Naive thymus-derived CD4-positive, alpha-beta T cell (primary cell): ENCODE measurements at regions of chr7 and their contacts with region 1.

Region 1: GRCh38 chr7:64665980-64666662 is at the start of gene ZNF107:
- DNase-seq: peak; percentile 48 to 90 (median 84)
- ATAC-seq: peak; percentile 98
- H3K4me3 ChIP-seq: peak within 1 kb of the TSS; percentile 92
- H3K4me3 Mint-ChIP-seq: peak within 1 kb of the TSS; percentile 92 to 98 (median 96)
- H3K27ac ChIP-seq: peak within 1 kb of the TSS; percentile 96
- H3K27ac Mint-ChIP-seq: peak within 1 kb of the TSS; percentile 96 to 98 (median 97)
- H3K4me1 ChIP-seq: peaks cover 11 to 19% of the 10 kb centered on the region in 2 donors
- H3K4me1 Mint-ChIP-seq: peaks cover 18 to 79% (median 71%) of the 10 kb centered on the region in 7 donors
- H3K27me3 ChIP-seq: no peaks in the 10 kb centered on the region
- H3K27me3 Mint-ChIP-seq: no peaks in the 10 kb centered on the region
- total RNA-seq, gene ZNF107: 11.2 to 33.5 (median 17.3) TPM

Region 2: DNA sequence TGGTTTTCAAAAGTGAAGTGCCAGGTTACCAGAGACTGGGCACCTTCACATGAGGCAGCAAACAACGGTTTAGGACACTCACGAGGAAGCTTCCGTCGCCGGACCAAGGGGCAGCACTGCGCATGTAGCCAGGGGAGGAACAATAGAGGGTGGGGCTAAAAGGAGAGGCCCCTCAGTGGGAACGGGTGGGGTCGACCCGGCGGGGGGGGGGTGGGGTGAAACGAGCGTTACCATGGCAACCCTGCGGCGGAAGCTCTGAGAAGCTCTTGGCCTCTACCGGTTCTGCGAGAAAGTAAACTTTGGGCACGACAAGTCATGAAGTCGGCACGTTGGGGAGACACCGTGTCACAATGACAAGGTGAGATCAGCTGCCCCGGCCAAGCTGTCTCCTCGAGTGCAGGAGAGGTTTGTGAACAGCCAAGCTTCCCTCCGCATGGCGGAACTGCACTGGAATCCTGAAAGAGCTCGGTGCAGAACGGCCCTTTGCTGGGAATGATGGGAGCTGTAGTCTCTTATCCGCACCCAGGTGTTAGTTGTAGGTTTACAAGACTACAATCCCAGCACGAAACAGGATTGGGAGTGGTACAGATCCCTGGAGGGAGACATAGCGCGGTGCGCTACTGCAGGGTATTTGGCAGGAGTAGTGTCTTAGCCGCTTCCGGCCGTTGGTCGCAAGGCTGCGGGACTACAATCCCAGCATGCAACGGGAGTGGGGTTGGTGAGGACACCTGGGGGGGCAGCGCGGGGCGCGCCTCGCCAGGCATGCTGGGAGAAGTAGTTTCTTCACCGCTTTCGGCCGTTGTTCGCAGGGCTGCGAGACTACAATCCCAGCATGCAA is 740.3 kb before region 1 on chr7:
- CTCF ChIA-PET with region 1: no interaction called
- POLR2A ChIA-PET with region 1: interaction called, 5 read pairs
- intact Hi-C with region 1: loop called in 1 of 2 experiments (anchors 1 kb)
- DNase-seq: peak; percentile 69 to 98 (median 95)
- ATAC-seq: peak; percentile 98
- H3K4me3 ChIP-seq: peak overlapping the region; percentile 64
- H3K4me3 Mint-ChIP-seq: peak overlapping the region; percentile 88 to 100 (median 98)
- H3K27ac ChIP-seq: peak overlapping the region; percentile 82
- H3K27ac Mint-ChIP-seq: peak overlapping the region; percentile 87 to 98 (median 95)
- H3K4me1 ChIP-seq: no peaks in the 10 kb centered on the region
- H3K4me1 Mint-ChIP-seq: peaks cover 0 to 24% (median 12%) of the 10 kb centered on the region in 7 donors
- H3K27me3 ChIP-seq: no peaks in the 10 kb centered on the region
- H3K27me3 Mint-ChIP-seq: peaks cover 0 to 4% (median 0%) of the 10 kb centered on the region in 5 donors

Region 3: DNA sequence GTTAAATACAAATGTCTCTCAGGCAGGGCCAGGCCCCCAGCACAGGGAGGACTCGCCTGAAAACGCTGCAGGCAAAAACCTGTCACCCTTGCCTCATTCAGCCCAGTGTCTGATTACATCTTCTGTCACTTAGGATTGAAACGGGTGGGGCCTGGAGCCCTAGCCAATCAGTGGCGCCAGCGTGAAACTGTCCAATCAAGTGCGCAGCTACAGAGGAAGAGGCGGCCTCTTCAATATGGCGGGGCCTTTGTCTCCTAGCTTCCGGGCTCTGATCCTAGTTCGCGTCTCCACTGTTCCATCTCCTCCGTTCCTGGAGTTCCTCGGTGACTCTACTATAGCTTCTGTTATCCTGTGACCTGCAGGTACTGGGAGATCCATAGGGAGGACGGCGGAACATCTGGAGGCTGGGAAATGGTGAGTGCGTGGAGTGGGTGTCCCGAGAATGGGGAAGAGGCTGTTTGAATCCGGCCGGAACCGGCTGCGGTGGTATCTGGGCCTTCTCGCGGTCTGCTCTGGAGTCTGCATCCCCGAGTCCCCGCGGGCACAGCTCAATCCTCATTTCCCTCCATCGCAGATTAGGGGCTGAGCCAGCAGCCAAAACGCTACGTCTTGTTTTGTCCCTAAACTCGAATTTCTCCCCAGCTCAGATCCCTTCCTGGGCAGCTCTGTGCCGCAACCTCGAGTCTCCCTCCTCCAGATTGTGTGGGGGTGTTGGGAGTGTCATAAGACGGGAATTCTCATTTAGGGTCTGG is 352.2 kb before region 1 on chr7 and contains the start of gene ZNF736:
- CTCF ChIA-PET with region 1: no interaction called
- POLR2A ChIA-PET with region 1: interaction called, 20 read pairs
- intact Hi-C with region 1: loop called (anchors 1 kb)
- DNase-seq: peak; percentile 64 to 92 (median 87)
- ATAC-seq: peak; percentile 100
- H3K4me3 ChIP-seq: peak within 1 kb of the TSS; percentile 81
- H3K4me3 Mint-ChIP-seq: peak within 1 kb of the TSS; percentile 90 to 100 (median 98)
- H3K27ac ChIP-seq: peak within 1 kb of the TSS; percentile 88
- H3K27ac Mint-ChIP-seq: peak within 1 kb of the TSS; percentile 88 to 100 (median 97)
- H3K4me1 ChIP-seq: peaks cover 8 to 12% of the 10 kb centered on the region in 2 donors
- H3K4me1 Mint-ChIP-seq: peaks cover 22 to 54% (median 39%) of the 10 kb centered on the region in 7 donors
- H3K27me3 ChIP-seq: no peaks in the 10 kb centered on the region
- H3K27me3 Mint-ChIP-seq: no peaks in the 10 kb centered on the region
- total RNA-seq, gene ZNF736: 22.8 to 54.2 (median 35.8) TPM

Region 4: DNA sequence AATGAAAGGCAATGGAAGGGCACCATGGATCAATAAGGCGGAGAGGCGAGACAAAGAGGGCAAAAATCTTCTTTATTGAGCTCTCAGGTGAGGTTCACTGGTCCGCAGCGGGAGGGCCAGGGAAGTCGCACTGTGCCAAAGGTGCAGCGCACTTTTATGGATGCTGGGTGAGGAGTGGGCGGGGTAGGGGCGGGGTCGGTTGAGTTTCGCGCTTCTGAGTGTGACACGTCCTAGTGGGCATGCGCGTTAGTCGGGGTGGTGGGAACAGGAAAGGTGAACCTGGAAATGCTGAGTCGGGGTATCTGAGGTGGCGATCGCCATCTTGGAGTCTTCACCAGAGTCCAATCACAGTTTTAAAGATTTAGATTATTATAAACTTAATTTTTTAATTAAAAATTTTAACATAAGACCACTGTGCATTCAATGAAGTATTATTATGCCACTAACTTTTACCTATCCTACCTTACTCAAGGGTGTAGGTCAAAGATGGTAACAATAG is 173.7 kb after region 1 on chr7:
- CTCF ChIA-PET with region 1: no interaction called
- POLR2A ChIA-PET with region 1: no interaction called
- intact Hi-C with region 1: no loop called
- DNase-seq: no peak
- ATAC-seq: no peak
- H3K4me3 ChIP-seq: no peak overlapping the region
- H3K4me3 Mint-ChIP-seq: no peak overlapping the region
- H3K27ac ChIP-seq: no peak overlapping the region
- H3K27ac Mint-ChIP-seq: no peak overlapping the region
- H3K4me1 ChIP-seq: no peaks in the 10 kb centered on the region
- H3K4me1 Mint-ChIP-seq: no peaks in the 10 kb centered on the region
- H3K27me3 ChIP-seq: no peaks in the 10 kb centered on the region
- H3K27me3 Mint-ChIP-seq: no peaks in the 10 kb centered on the region

Region 5: DNA sequence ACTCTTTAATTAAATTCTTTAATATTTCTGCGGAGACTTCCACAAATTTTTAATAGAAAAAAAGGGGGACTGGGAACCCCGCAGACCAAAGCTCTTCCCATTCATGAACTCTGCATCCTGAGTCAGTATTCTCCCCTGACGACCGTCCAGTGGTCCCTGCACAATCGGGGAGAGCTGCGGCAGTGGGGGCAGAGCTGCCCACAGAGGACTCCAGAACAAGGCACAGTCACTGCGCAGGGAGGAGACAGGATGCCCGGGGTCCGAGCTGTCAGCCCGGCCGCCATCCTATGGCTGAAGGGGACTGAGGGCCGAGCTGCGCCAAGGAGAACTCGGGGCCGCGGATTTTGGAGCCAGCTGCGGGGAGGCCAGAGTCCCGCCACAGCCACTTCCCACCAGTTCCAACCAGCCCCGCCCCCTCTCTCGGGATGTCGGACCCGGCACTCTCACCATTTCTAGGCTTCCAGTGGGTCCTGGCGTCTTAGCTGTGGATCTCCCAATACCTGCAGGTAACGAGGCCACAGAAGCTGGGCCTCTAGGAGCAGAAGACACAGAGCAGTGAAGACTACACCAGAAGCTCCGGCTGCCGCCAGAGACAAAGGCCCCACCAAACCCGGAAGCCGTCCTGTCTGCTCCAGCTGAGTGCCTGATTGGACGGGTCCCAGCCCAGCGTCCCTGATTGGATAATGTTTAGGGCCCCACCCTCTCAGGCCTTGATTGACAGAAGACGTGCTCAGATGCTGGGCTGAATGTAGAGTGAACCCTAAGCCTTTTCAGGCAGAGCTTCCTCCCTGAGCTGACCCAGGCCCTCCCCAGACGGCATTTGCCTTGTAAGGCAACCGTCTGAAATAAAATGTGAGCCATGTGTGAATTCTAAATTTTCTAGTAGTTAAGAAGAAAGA is 340.2 kb after region 1 on chr7 and contains the start of gene ERV3-1:
- CTCF ChIA-PET with region 1: no interaction called
- POLR2A ChIA-PET with region 1: interaction called, 11 read pairs
- intact Hi-C with region 1: loop called (anchors 1 to 5 kb)
- DNase-seq: peak; percentile 76 to 96 (median 93)
- ATAC-seq: peak; percentile 99
- H3K4me3 ChIP-seq: peak within 1 kb of the TSS; percentile 72
- H3K4me3 Mint-ChIP-seq: peak within 1 kb of the TSS; percentile 75 to 96 (median 94)
- H3K27ac ChIP-seq: peak within 1 kb of the TSS; percentile 81
- H3K27ac Mint-ChIP-seq: peak within 1 kb of the TSS; percentile 73 to 98 (median 94)
- H3K4me1 ChIP-seq: peaks cover 4 to 21% of the 10 kb centered on the region in 2 donors
- H3K4me1 Mint-ChIP-seq: peaks cover 26 to 57% (median 45%) of the 10 kb centered on the region in 7 donors
- H3K27me3 ChIP-seq: no peaks in the 10 kb centered on the region
- H3K27me3 Mint-ChIP-seq: no peaks in the 10 kb centered on the region
- total RNA-seq, gene ERV3-1: 12.2 to 22.9 (median 14.9) TPM